Activated naive CD4-positive, alpha-beta T cell treated with anti-CD3 and anti-CD28 coated beads for 36 hours (primary cell): ENCODE measurements at regions of chr11 and their contacts with region 1.

Region 1: DNA sequence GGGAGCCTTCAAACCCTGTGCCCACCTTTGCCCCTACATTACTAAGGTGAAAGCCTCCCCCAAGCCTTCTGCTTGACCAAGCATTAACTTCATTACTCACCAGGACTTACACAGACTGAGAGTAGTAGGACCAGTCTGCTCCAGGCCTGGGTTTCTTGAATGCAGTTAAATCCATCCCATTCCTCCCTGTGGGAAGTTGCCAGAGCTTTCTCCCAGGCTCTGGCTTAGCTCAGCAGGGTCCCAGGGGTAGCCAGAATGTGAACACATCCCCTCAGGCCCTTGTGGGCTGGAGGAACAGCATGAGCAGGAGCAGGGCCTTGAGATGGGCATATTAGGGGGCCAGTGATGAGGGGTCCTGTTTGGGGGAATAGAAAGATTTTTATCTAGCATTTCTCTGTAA is 59.9 kb downstream of the RRM1 start:
- DNase-seq: no peak
- H3K4me3 Mint-ChIP-seq: no peak overlapping the region
- H3K27ac Mint-ChIP-seq: no peak overlapping the region
- H3K4me1 Mint-ChIP-seq: no peaks in the 10 kb centered on the region
- H3K27me3 Mint-ChIP-seq: no peaks in the 10 kb centered on the region

Region 2: GRCh38 chr11:4102711-4103110 is 51.8 kb before region 1 on chr11:
- CTCF ChIA-PET with region 1: no interaction called
- intact Hi-C with region 1: loop called (anchors 5 kb)
- DNase-seq: no peak
- H3K4me3 Mint-ChIP-seq: no peak overlapping the region
- H3K27ac Mint-ChIP-seq: no peak overlapping the region
- H3K4me1 Mint-ChIP-seq: peaks cover 33% of the 10 kb centered on the region
- H3K27me3 Mint-ChIP-seq: no peaks in the 10 kb centered on the region

Region 3: DNA sequence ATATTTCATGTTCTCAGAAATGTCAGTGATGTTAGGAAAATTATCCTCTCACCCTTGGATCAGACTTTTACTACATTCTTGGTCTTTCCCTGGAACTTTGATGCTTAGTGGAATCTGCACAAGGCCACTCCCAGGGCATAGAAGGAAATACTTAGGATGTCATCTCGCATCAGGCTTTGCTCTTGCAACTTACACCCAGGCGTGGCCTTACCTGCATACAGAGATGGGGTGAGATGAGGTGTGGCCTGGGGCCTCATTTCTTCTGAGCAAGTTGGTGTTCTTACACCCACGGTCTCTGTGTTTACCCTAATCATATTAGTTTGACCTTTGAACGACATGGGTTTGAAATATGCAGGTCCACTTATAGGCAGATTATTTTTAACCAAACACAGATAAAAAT is 275.5 kb after region 1 on chr11:
- CTCF ChIA-PET with region 1: no interaction called
- intact Hi-C with region 1: no loop called
- DNase-seq: no peak
- H3K4me3 Mint-ChIP-seq: no peak overlapping the region
- H3K27ac Mint-ChIP-seq: no peak overlapping the region
- H3K4me1 Mint-ChIP-seq: no peaks in the 10 kb centered on the region
- H3K27me3 Mint-ChIP-seq: peaks cover 1% of the 10 kb centered on the region